Left ventricle myocardium superior (tissue), 1 donor: ENCODE measurements at regions of chr10 and their contacts with region 1.

Region 1: DNA sequence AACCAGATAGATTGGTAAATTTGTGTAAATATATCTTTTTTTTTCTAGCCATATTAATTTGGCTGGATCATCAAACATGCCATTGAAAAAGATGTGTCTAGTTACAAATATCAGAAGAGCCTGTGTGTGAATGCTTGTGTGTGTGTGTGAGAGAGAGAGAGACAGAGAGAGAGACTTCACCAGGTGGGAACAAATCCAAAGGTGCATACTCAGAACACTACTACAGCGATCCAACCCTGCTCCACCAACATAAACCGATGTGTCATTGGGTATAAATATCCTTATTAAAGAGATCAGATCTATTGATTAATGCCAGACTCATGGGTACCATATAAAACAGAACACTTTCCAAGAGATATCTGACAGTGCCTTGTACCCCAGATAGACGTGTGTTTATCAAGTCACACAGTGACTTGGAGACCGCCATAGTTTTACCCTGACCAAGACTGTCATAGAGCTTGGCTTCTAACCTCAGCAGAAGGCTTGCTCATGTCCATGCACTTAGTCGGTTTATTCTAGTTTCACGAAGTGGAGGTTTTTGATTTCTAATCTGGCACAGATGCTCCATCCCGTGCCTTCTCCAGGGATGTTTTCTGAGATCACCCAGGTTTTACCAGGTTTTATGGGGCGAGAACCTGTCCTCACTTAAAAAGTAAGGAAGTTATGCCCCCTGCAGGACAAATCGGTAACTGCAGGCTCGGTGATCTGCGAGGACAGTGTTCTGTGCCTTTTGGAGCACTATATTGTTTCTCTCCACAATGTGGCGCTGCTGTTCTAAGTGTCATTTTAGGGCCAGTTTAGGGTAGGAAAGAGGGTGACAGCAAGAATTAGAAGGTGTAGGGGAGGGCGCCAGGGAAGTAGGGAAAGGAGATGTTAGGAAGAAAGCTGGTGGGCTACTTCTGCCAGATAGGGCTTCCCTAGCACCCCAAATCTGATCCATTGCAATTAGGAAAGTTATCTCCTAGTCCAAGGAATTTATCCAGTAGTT is 29.3 kb upstream of the WNT8B start:
- DNase-seq: peak; percentile 90
- ATAC-seq: peak; percentile 93

Region 2: GRCh38 chr10:100333661-100334459 is 99.7 kb before region 1 on chr10:
- intact Hi-C with region 1: loop called (anchors 2 kb)
- DNase-seq: no peak
- ATAC-seq: no peak